ENCODE measurements at regions of chr5 and their contacts with region 1.

Region 1: DNA sequence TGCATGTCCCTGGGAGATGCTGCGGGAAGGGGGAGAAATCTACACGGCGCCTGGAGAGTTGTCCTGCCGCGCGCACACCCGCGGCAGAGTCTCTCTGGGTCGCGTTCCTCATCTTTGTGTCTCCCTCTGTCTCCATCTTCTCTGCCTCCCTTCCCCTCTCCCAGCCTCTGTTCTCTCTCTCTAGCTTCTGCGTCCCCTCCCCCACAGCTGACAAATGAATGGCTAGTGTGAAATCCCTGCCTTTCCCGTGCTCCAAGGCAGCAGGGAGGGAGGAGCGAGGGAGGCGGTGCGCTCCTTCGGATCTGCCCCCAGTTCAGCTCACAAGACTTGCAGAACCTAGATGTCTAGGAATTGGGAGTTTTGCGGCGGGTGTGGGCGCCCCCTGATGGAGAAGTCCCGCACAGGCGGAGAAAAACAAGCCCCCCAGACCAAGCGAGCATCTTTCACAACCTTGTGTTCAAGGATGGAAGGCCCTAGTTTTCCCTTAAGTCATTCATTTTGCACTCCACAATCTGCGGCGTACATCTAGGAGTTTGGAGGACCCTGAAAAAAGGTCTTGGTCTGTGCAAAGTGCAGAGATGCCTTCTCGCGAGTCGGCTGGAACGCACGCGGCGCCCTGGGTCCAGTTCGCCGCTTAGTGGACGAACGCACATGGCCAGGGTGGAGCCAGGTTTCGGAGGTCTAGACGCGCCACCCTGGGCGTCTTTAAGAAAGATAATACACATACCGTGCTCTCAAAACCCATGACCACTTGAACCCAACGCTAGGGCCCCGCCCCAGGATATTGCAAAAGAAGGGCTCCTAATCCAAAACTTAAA is 2.0 kb downstream of the VCAN start:
- DNase-seq: peak; percentile 98
- H3K4me3 Mint-ChIP-seq: peak overlapping the region; percentile 80
- H3K27ac Mint-ChIP-seq: peak overlapping the region; percentile 87
- H3K4me1 Mint-ChIP-seq: peaks cover 19% of the 10 kb centered on the region
- H3K27me3 Mint-ChIP-seq: peaks cover 23% of the 10 kb centered on the region
- CTCF ChIP-seq: peak; percentile 90

Region 2: DNA sequence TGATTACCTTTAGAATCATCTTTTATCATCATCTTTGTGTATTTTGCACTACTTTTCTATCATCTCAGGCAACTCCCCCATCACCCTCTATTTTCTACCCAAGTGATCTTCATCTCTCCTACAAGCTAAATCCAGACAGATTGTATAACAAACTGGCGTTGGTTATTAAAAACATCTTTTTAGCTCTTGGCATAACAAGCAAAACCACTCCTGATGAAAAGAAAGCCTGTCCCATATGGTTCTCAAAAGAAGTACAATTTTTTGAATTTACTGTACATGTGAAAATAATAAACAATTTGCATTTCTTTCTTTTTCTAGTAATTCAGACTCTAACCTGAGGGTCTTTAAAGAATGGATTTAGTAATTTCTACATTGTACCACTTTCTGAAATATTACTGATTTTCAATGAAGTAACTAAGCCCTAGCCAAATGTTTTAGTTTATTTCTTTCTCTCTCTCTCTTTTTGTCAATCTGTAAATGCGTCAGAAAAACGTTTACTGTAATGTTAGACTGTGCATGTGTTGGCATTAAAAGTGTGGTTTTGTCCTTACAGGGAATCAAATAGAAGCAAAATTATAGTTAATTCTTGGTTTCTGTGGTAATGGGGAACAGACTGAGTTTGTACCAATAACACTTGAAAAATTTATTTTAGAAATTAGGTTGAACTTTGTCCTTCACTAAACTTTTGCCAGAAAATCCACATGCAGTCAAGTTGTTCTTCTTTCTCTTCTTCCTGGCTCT is 1142.9 kb before region 1 on chr5:
- CTCF ChIA-PET with region 1: no interaction called
- POLR2A ChIA-PET with region 1: no interaction called
- intact Hi-C with region 1: no loop called
- DNase-seq: no peak
- H3K4me3 Mint-ChIP-seq: no peak overlapping the region
- H3K27ac Mint-ChIP-seq: no peak overlapping the region
- H3K4me1 Mint-ChIP-seq: no peaks in the 10 kb centered on the region
- H3K27me3 Mint-ChIP-seq: no peaks in the 10 kb centered on the region
- CTCF ChIP-seq: no peak

Region 3: GRCh38 chr5:82351754-82352145 is 1121.8 kb before region 1 on chr5:
- CTCF ChIA-PET with region 1: interaction called, 14 read pairs
- POLR2A ChIA-PET with region 1: interaction called, 4 read pairs
- intact Hi-C with region 1: loop called (anchors 1 kb)
- DNase-seq: peak; percentile 83
- H3K4me3 Mint-ChIP-seq: no peak overlapping the region
- H3K27ac Mint-ChIP-seq: peak overlapping the region; percentile 68
- H3K4me1 Mint-ChIP-seq: peaks cover 38% of the 10 kb centered on the region
- H3K27me3 Mint-ChIP-seq: no peaks in the 10 kb centered on the region
- CTCF ChIP-seq: peak; percentile 46

Region 4: GRCh38 chr5:82406205-82406773 is 1067.3 kb before region 1 on chr5:
- CTCF ChIA-PET with region 1: no interaction called
- POLR2A ChIA-PET with region 1: interaction called, 3 read pairs
- intact Hi-C with region 1: loop called (anchors 5 kb)
- DNase-seq: peak; percentile 99
- H3K4me3 Mint-ChIP-seq: peak overlapping the region; percentile 62
- H3K27ac Mint-ChIP-seq: peak overlapping the region; percentile 98
- H3K4me1 Mint-ChIP-seq: peaks cover 26% of the 10 kb centered on the region
- H3K27me3 Mint-ChIP-seq: no peaks in the 10 kb centered on the region
- CTCF ChIP-seq: no peak

Region 5: DNA sequence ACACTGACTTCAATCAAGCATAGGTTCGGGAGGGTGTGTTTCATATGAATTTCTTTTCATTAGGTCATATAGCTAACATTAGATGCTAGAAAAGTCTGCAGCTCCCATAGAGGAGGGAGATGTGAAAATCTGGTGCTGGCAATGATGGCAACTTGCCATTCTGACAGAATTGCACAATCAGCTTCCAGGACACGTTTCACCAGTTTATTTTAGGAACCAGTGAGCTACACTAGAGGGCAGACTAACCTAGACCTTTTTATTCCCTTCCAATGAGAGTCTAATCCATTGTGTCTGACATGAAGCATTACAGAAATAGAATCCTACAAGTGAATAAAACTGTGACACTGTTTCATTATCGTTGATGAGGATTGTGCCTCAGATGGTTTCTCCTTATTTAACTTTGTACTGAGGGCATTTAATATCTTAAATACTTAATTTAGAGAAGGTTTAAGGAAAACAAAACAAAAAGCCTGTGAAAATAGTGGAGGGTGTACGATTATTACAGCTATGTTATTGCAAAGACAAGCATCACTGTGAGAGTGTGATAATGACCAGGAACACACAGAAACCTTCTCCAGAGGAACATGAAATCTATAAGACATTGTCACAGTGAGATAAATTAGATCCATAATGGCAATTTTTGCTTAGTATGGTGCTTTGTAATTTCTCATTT is 832.1 kb before region 1 on chr5:
- CTCF ChIA-PET with region 1: interaction called, 11 read pairs
- POLR2A ChIA-PET with region 1: interaction called, 5 read pairs
- intact Hi-C with region 1: loop called (anchors 1 kb)
- DNase-seq: peak; percentile 94
- H3K4me3 Mint-ChIP-seq: no peak overlapping the region
- H3K27ac Mint-ChIP-seq: no peak overlapping the region
- H3K4me1 Mint-ChIP-seq: peaks cover 7% of the 10 kb centered on the region
- H3K27me3 Mint-ChIP-seq: no peaks in the 10 kb centered on the region
- CTCF ChIP-seq: peak; percentile 66

Region 6: DNA sequence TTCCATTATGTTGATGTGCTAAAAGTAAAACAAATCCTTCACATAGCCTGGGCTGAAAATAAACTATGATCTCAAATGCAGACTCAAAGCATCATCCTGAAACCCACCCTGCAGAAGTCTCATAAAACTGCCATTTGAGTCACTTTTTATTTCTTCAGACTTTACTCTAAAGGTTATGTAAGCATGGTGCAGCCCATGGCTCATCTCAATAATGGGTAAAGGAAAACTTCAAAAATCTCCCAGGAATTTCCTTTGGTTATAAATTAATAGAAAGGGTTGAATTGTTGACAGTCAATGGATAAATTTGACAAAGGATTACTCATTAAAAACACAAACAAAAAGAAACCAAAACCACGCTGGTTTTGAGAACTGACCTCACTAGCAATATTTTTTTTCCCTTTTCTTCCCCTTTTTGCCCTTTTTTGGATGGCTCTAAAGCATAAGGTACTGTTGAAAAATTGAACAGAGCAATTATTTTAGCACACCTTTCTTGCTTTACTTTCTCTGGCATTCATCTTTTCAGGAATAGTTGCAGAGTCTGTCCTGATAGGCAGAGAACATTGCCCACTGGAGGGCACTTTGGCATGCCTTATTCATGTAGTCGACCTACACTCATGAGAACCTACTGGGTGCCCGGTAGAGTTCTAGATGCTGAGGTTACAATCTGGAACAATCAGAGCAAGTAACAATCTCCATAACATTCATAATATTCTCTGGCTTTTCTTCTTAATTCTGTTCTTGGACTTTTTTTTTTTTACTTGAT is 587.7 kb before region 1 on chr5:
- CTCF ChIA-PET with region 1: no interaction called
- POLR2A ChIA-PET with region 1: no interaction called
- intact Hi-C with region 1: loop called (anchors 5 kb)
- DNase-seq: peak; percentile 16
- H3K4me3 Mint-ChIP-seq: no peak overlapping the region
- H3K27ac Mint-ChIP-seq: no peak overlapping the region
- H3K4me1 Mint-ChIP-seq: no peaks in the 10 kb centered on the region
- H3K27me3 Mint-ChIP-seq: no peaks in the 10 kb centered on the region
- CTCF ChIP-seq: no peak

Region 7: DNA sequence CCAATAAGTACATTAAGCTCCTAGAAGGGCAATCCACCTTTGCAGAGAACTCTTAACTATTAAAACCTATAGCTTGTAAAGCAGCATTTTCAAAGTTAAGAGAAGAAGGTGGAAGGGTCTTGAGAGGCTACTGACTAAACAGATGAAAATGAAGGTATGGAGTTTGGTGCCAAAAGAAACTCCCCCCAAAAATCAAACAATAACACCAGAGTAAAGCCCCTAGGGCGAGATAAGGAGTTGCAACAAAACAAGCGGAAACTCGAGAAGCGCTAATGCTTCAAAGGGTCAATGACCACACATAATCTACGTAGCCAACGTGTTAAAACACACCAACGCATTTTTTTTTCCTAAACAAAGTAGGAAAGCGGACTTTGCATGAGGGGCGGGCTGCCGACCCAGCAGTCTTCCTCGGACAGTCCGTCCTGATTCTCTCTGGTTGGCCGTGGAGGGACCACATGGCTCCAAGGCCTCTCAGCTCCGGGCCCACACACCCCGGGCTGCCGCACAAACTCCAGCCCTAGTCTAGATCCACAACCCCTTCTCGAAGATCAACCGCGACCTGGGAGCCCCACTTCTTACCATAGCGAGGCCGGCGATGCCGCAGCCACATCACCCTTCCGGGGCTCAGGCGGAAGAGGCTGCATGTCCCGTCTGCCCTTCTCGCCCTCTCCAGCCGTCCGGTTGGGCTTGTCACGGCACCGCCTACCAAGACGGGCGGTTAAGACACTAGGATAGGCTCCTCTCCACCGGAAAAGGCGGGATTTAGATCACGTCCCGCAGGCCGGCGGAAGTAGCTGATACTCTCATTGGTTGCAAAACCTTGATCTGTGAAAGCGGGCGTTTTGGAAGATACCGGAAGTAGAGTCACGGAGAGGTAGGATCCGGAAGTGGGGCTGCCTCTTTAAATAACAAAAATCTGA is 396.6 kb before region 1 on chr5 and contains the starts of genes TMEM167A and XRCC4:
- CTCF ChIA-PET with region 1: no interaction called
- POLR2A ChIA-PET with region 1: interaction called, 12 read pairs
- intact Hi-C with region 1: loop called (anchors 2 kb)
- DNase-seq: peak; percentile 99
- H3K4me3 Mint-ChIP-seq: peak within 1 kb of the TSS; percentile 93
- H3K27ac Mint-ChIP-seq: peak within 1 kb of the TSS; percentile 96
- H3K4me1 Mint-ChIP-seq: peaks cover 21% of the 10 kb centered on the region
- H3K27me3 Mint-ChIP-seq: no peaks in the 10 kb centered on the region
- CTCF ChIP-seq: no peak
- total RNA-seq, gene TMEM167A: 84.1 and 122 TPM in 2 replicates
- total RNA-seq, gene XRCC4: 7.1 and 8.4 TPM in 2 replicates

Region 8: DNA sequence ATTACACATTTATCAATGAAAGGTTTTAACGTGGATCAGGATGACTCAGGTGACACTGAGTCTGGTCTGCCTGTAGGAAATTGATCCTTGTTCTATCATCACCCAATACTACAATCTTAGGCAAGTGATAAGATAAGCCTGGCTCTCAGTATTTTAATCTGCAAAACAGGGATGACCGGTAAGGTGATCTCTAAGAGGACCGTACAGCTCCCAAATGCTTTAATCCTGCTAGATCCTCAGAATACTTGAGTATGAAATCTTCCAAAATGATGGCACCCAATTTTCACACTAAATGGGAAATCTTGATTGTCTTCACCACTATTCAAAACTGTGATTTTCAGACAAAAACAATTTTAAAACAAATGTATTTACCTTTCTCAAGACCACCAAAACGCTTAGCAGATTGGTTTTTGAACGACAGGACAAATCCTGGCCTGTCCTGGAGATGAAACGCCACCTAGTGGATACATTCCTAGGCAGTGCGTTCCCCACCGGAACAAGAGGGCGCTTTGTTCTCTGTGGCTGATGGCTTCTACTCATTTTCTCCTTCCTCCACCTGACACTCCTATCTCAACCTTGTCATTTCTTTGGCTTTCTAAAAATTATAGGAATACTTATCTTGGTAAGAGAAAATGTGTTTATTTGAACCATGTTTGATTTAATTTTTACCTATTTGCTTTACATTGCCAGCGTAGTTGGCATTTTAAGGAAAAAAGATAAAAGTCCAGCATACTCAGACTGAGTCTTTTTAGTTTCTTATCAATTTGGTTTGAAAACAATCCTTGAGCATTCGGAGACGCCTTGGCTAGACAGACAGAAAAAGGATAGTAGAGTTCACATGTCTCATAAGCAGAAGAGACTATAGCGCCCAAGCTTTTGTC is 43.2 kb before region 1 on chr5:
- CTCF ChIA-PET with region 1: interaction called, 6 read pairs
- POLR2A ChIA-PET with region 1: no interaction called
- intact Hi-C with region 1: loop called (anchors 2 kb)
- DNase-seq: peak; percentile 72
- H3K4me3 Mint-ChIP-seq: no peak overlapping the region
- H3K27ac Mint-ChIP-seq: no peak overlapping the region
- H3K4me1 Mint-ChIP-seq: no peaks in the 10 kb centered on the region
- H3K27me3 Mint-ChIP-seq: no peaks in the 10 kb centered on the region
- CTCF ChIP-seq: peak; percentile 78